ENCODE measurements at regions of chr6 and their contacts with region 1.

Region 1: GRCh38 chr6:106014930-106015329 is 71.2 kb upstream of the PRDM1 start:
- DNase-seq: no peak
- ATAC-seq: no peak
- H3K4me3 ChIP-seq: no peak overlapping the region
- H3K4me3 Mint-ChIP-seq: no peak overlapping the region
- H3K27ac ChIP-seq: no peak overlapping the region
- H3K27ac Mint-ChIP-seq: no peak overlapping the region
- H3K4me1 ChIP-seq: no peaks in the 10 kb centered on the region
- H3K4me1 Mint-ChIP-seq: peaks cover 0 to 12% (median 0%) of the 10 kb centered on the region in 7 donors
- H3K27me3 ChIP-seq: no peaks in the 10 kb centered on the region
- H3K27me3 Mint-ChIP-seq: peaks cover 7 to 35% (median 9%) of the 10 kb centered on the region in 5 donors

Region 2: GRCh38 chr6:105935416-105935815 is 79.5 kb before region 1 on chr6:
- CTCF ChIA-PET with region 1: no interaction called
- POLR2A ChIA-PET with region 1: no interaction called
- intact Hi-C with region 1: loop called in 1 of 2 experiments (anchors 5 kb)
- DNase-seq: no peak
- ATAC-seq: no peak
- H3K4me3 ChIP-seq: no peak overlapping the region
- H3K4me3 Mint-ChIP-seq: no peak overlapping the region
- H3K27ac ChIP-seq: no peak overlapping the region
- H3K27ac Mint-ChIP-seq: no peak overlapping the region
- H3K4me1 ChIP-seq: no peaks in the 10 kb centered on the region
- H3K4me1 Mint-ChIP-seq: peaks cover 0 to 3% (median 0%) of the 10 kb centered on the region in 7 donors
- H3K27me3 ChIP-seq: no peaks in the 10 kb centered on the region
- H3K27me3 Mint-ChIP-seq: peaks cover 0 to 5% (median 0%) of the 10 kb centered on the region in 5 donors

Region 3: GRCh38 chr6:106056060-106056745 is 41.3 kb after region 1 on chr6:
- CTCF ChIA-PET with region 1: no interaction called
- POLR2A ChIA-PET with region 1: no interaction called
- intact Hi-C with region 1: loop called in 1 of 2 experiments (anchors 5 kb)
- DNase-seq: peak in 7 of 9 donors; percentile 22 to 69 (median 50)
- ATAC-seq: peak; percentile 68
- H3K4me3 ChIP-seq: peak overlapping the region; percentile 26
- H3K4me3 Mint-ChIP-seq: peak overlapping the region; percentile 1 to 80 (median 58)
- H3K27ac ChIP-seq: no peak overlapping the region
- H3K27ac Mint-ChIP-seq: peak overlapping the region in 4 of 9 donors; percentile 1 to 49 (median 2)
- H3K4me1 ChIP-seq: peaks cover 19 to 22% of the 10 kb centered on the region in 2 donors
- H3K4me1 Mint-ChIP-seq: peaks cover 6 to 32% (median 29%) of the 10 kb centered on the region in 7 donors
- H3K27me3 ChIP-seq: no peaks in the 10 kb centered on the region
- H3K27me3 Mint-ChIP-seq: peaks cover 0 to 11% (median 0%) of the 10 kb centered on the region in 5 donors

Measured in naive thymus-derived CD4-positive, alpha-beta T cell (primary cell).